ENCODE measurements at regions of chr18 and their contacts with region 1.

Region 1: DNA sequence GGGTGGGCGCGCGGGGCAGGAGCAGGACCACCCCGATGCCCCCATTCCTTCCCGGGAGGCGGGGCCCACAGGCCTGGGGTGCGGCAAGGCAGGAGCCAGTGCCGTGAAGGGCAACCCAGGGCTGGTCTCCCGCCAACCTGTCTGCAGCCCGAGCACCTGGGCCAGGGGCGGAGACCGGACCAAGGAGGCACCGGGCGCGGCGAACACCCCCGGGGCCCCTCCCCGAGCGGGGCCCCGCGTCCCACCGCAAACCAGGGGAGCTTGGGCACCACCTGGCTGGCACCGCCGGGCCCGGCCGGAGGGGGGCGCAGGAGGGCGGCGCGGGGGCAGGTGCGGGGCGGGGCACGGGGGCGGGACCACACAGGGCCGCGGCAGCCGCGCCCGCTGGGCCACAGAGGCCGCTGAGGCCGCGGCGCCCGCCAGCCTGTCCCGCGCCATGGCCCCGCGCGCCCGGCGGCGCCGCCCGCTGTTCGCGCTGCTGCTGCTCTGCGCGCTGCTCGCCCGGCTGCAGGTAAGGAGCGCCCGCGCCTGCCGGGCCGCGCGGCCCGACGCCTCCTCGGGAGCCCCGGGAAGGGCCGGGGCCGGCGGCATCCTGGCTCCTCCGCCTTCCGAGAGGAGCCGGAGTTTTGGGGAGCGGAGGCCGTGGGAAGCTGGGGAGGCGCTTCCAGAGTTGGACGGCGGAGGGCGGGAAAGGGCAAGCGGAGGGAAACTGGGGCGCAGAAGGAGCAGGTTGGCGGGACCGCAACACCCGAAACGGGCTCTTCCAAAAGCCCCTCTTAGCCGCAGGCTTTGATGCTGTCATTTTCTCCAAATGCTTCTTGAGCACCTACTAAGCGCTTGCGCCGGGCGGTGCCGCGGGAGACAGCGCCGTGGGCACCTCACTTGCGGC is at the start of gene TNFRSF11A:
- DNase-seq: peak; percentile 91
- H3K4me3 Mint-ChIP-seq: peak within 1 kb of the TSS; percentile 91
- H3K27ac Mint-ChIP-seq: peak within 1 kb of the TSS; percentile 89
- H3K4me1 Mint-ChIP-seq: peaks cover 54% of the 10 kb centered on the region
- H3K27me3 Mint-ChIP-seq: peaks cover 39% of the 10 kb centered on the region
- total RNA-seq, gene TNFRSF11A: 14.0 and 16.4 TPM in 2 replicates

Region 2: GRCh38 chr18:62186774-62187542 is 138.2 kb before region 1 on chr18 and contains the starts of genes PIGN and RELCH:
- intact Hi-C with region 1: loop called (anchors 2 kb)
- DNase-seq: peak; percentile 98
- H3K4me3 Mint-ChIP-seq: peak within 1 kb of the TSS; percentile 100
- H3K27ac Mint-ChIP-seq: peak within 1 kb of the TSS; percentile 97
- H3K4me1 Mint-ChIP-seq: peaks cover 42% of the 10 kb centered on the region
- H3K27me3 Mint-ChIP-seq: no peaks in the 10 kb centered on the region
- total RNA-seq, gene PIGN: 32.0 and 33.9 TPM in 2 replicates
- total RNA-seq, gene RELCH: 30.6 and 31.1 TPM in 2 replicates

Region 3: DNA sequence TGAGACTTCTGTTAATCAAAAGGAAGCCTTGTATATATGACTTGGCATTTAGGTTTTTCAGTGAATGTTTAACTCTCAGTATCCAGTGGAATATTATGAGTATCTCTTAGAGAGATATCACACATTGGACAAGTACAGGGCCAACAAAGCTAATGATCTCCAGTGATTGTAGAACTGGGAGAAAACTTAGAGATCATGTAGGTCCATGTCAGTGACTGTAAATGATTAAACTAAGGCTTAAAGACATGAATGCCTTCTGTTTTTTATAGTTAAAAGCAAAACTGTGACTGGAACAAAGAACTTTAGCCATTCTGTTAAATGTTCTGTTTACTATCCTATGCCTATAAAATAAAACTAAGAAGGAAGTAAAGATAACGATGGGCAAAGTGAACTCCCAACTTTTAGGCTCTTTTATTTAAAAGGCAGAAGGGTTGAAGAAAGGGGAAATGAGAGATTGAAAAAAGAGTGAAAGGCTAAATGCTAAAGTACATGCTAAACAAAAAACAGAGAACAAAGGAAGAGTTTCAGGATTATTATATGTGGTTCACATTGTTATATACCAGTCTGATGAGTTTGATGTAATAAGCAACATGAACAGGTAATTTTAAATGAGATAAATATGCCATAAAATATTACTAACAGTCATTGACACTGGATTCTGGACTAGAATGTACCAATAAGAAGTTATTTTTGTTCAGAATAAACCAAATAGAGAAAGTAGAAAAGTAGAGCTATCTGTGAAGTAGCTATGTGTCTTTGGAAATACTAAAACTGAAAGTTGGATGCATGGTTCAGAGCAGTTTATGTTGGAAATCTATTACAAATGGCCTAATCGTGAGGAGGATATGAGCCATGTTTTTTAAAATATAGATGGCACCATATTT is 37.1 kb before region 1 on chr18:
- intact Hi-C with region 1: loop called (anchors 2 kb)
- DNase-seq: no peak
- H3K4me3 Mint-ChIP-seq: no peak overlapping the region
- H3K27ac Mint-ChIP-seq: no peak overlapping the region
- H3K4me1 Mint-ChIP-seq: peaks cover 11% of the 10 kb centered on the region
- H3K27me3 Mint-ChIP-seq: no peaks in the 10 kb centered on the region

Region 4: GRCh38 chr18:62346333-62347090 is 21.4 kb after region 1 on chr18:
- intact Hi-C with region 1: loop called (anchors 2 kb)
- DNase-seq: no peak
- H3K4me3 Mint-ChIP-seq: peak overlapping the region; percentile 26
- H3K27ac Mint-ChIP-seq: peak overlapping the region; percentile 80
- H3K4me1 Mint-ChIP-seq: peaks cover 23% of the 10 kb centered on the region
- H3K27me3 Mint-ChIP-seq: no peaks in the 10 kb centered on the region

Region 5: GRCh38 chr18:62425465-62426195 is 100.5 kb after region 1 on chr18:
- intact Hi-C with region 1: loop called (anchors 1 kb)
- DNase-seq: peak; percentile 92
- H3K4me3 Mint-ChIP-seq: peak overlapping the region; percentile 62
- H3K27ac Mint-ChIP-seq: peak overlapping the region; percentile 84
- H3K4me1 Mint-ChIP-seq: peaks cover 37% of the 10 kb centered on the region
- H3K27me3 Mint-ChIP-seq: no peaks in the 10 kb centered on the region

Region 6: GRCh38 chr18:62522504-62523254 is 197.5 kb after region 1 on chr18 and contains the start of gene ZCCHC2:
- intact Hi-C with region 1: loop called (anchors 2 kb)
- DNase-seq: peak; percentile 100
- H3K4me3 Mint-ChIP-seq: peak within 1 kb of the TSS; percentile 93
- H3K27ac Mint-ChIP-seq: peak within 1 kb of the TSS; percentile 94
- H3K4me1 Mint-ChIP-seq: peaks cover 21% of the 10 kb centered on the region
- H3K27me3 Mint-ChIP-seq: no peaks in the 10 kb centered on the region
- total RNA-seq, gene ZCCHC2: 47.0 and 52.8 TPM in 2 replicates

Region 7: GRCh38 chr18:62584241-62585120 is 259.3 kb after region 1 on chr18:
- intact Hi-C with region 1: loop called (anchors 5 kb)
- DNase-seq: peak; percentile 94
- H3K4me3 Mint-ChIP-seq: peak overlapping the region; percentile 59
- H3K27ac Mint-ChIP-seq: peak overlapping the region; percentile 82
- H3K4me1 Mint-ChIP-seq: peaks cover 40% of the 10 kb centered on the region
- H3K27me3 Mint-ChIP-seq: no peaks in the 10 kb centered on the region

Measured in activated CD4-positive, alpha-beta T cell treated with anti-CD3 and anti-CD28 coated beads, Interleukin-2, amount 10 ng/mL, durations not matched to agents 24 days and 14 days (primary cell).